Activated naive CD4-positive, alpha-beta T cell treated with anti-CD3 and anti-CD28 coated beads, Interleukin-2, amount 10 ng/mL, durations not matched to agents 7 days and 5 days (primary cell): ENCODE measurements at regions of chr5 and their contacts with region 1.

Region 1: DNA sequence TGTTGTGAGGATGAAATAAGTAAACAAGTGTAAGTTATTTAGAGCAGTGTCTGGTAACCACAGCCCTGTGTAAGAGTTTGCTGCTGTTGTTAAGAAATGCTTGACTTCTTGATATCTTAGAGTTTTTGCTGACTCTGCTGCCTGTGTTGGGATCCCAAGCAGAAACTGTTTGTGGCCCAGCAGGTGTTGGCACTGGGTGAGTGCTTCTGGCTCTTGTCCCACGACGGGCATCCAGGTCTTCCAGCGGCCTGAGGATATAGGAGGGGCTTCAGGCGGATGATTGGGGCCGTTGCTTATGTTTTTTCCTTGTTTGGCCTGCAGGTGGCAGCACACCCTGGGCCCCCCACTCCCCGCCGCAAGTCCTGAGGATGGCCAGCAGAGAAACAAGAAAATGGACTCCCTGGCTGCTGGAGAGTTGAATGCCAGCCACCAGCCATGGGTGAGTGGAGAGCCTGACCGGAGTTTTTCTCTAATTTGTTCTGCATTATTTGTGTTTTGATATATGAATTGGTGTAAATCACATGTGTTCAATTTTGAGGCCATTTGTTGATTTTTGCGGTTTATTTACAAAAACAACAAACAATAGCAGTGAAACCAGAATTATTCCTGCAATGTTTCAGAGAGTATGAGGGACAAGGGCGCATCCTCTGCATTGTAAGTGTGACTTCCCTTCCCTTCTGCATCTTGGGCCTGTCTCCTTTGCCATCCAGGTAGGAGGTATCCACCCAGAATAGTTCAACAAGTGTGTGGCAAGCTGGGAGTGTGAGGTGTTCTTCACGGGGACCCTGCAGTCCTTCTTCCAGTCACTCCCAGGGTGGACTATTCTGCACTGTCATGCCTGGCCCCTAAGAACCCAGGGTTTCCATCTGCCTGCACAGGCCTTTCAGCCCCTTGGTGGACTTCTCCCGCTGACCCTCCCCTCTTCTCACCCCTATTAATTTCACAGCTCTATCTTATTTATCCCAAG is 50.3 kb downstream of the SLC22A5 start:
- DNase-seq: peak; percentile 75
- H3K4me3 Mint-ChIP-seq: peak overlapping the region; percentile 62
- H3K27ac Mint-ChIP-seq: peak overlapping the region; percentile 90
- H3K4me1 Mint-ChIP-seq: peaks cover 99% of the 10 kb centered on the region
- H3K27me3 Mint-ChIP-seq: no peaks in the 10 kb centered on the region

Region 2: DNA sequence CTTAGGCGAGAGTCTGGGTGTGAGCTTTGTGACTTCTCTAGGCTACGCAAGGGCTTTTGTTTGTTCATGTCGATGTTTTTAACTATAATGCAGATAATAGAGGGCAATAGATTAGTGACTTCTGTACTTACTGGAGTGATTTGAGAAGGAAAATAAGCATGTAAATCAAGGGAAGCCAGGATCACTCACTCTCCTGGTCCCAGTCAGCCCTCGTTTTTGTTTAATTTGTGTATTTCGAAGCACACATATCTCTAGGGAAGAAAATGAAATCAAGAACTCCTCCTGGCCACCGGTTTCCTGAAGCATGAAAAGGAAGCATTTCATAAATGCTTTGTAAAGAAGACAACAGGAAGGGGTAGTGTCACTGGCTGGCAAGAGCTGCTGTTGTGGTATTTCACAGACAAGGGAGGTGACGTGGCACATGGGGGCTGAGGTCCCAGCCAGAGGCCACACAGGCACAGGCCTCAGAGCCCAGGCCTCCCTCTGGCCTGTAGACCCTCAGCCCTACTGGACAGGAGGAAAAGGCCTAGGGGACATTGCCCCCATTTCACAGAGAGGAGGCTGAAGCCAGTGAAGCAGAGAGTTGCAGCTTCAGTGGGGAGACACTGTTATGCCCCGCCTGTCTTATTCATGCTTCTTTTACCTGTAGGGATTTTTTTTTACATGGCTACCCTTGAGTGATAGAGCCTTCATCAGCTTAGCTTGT is 36.7 kb after region 1 on chr5:
- CTCF ChIA-PET with region 1: interaction called, 13 read pairs
- DNase-seq: peak; percentile 78
- H3K4me3 Mint-ChIP-seq: peak overlapping the region; percentile 63
- H3K27ac Mint-ChIP-seq: peak overlapping the region; percentile 100
- H3K4me1 Mint-ChIP-seq: peaks cover 91% of the 10 kb centered on the region
- H3K27me3 Mint-ChIP-seq: no peaks in the 10 kb centered on the region

Region 3: DNA sequence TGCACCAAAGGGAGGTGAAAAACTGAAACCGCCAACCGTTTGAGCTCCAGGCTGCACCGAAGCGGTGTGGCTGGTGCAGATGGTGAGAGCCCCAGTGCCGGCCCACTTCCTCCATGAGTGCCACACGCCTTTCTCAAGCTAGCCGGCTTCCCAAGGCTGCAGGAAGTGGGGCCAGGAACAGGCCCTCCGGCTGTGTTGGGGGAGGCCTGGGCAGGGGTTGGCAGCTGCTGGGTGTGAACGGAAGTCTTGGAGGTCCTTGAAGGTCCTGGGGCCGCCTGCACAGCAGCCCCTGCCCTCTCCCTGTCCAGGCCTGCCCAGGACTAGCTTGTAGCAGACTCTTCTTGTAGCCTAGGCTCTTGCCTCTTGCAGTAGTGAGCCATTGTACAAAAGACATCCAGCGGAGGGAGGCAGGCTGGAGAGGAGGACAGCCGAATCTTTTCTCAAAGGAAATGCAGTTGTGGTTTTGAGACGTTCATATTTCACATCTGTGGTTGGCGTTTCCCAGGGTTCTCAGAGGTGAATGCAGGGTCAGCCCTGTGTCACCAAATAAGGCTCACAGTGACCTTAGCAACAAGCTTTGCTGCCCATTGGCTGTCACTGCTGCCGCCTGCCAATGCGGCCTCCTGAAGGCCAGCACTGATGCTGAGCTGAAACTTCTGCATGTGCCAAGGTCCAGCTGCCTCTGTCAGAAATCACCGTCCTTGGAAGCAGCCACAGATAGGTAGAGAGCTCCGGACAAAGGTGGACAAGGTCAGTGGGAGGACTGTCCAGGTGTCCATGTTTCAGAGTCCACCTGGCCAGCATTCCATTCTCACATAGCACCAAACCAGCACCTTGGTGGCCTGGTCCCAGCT is 46.9 kb after region 1 on chr5:
- CTCF ChIA-PET with region 1: interaction called, 63 read pairs
- DNase-seq: peak; percentile 87
- H3K4me3 Mint-ChIP-seq: peak overlapping the region; percentile 50
- H3K27ac Mint-ChIP-seq: peak overlapping the region; percentile 91
- H3K4me1 Mint-ChIP-seq: peaks cover 99% of the 10 kb centered on the region
- H3K27me3 Mint-ChIP-seq: no peaks in the 10 kb centered on the region

Region 4: GRCh38 chr5:132473019-132473531 is 53.3 kb after region 1 on chr5:
- CTCF ChIA-PET with region 1: interaction called, 63 read pairs
- DNase-seq: peak; percentile 94
- H3K4me3 Mint-ChIP-seq: peak overlapping the region; percentile 16
- H3K27ac Mint-ChIP-seq: peak overlapping the region; percentile 95
- H3K4me1 Mint-ChIP-seq: peaks cover 95% of the 10 kb centered on the region
- H3K27me3 Mint-ChIP-seq: no peaks in the 10 kb centered on the region

Region 5: GRCh38 chr5:132495667-132496190 is 75.9 kb after region 1 on chr5:
- CTCF ChIA-PET with region 1: interaction called, 87 read pairs
- DNase-seq: peak; percentile 86
- H3K4me3 Mint-ChIP-seq: peak overlapping the region; percentile 95
- H3K27ac Mint-ChIP-seq: peak overlapping the region; percentile 99
- H3K4me1 Mint-ChIP-seq: peaks cover 77% of the 10 kb centered on the region
- H3K27me3 Mint-ChIP-seq: no peaks in the 10 kb centered on the region

Region 6: GRCh38 chr5:132500931-132501630 is 81.3 kb after region 1 on chr5:
- CTCF ChIA-PET with region 1: interaction called, 87 read pairs
- DNase-seq: peak; percentile 83
- H3K4me3 Mint-ChIP-seq: no peak overlapping the region
- H3K27ac Mint-ChIP-seq: peak overlapping the region; percentile 12
- H3K4me1 Mint-ChIP-seq: peaks cover 39% of the 10 kb centered on the region
- H3K27me3 Mint-ChIP-seq: peaks cover 24% of the 10 kb centered on the region

Region 7: GRCh38 chr5:132591145-132591544 is 171.4 kb after region 1 on chr5:
- CTCF ChIA-PET with region 1: no interaction called
- DNase-seq: no peak
- H3K4me3 Mint-ChIP-seq: no peak overlapping the region
- H3K27ac Mint-ChIP-seq: no peak overlapping the region
- H3K4me1 Mint-ChIP-seq: no peaks in the 10 kb centered on the region
- H3K27me3 Mint-ChIP-seq: no peaks in the 10 kb centered on the region